Naive thymus-derived CD4-positive, alpha-beta T cell (primary cell): ENCODE measurements at regions of chr16 and their contacts with region 1.

Region 1: GRCh38 chr16:67246934-67247697 is at the start of gene FHOD1:
- DNase-seq: peak; percentile 88 to 100 (median 91)
- ATAC-seq: peak; percentile 85
- H3K4me3 ChIP-seq: peak within 1 kb of the TSS; percentile 68
- H3K4me3 Mint-ChIP-seq: peak within 1 kb of the TSS; percentile 83 to 96 (median 91)
- H3K27ac ChIP-seq: peak within 1 kb of the TSS; percentile 60
- H3K27ac Mint-ChIP-seq: peak within 1 kb of the TSS; percentile 70 to 92 (median 80)
- H3K4me1 ChIP-seq: peaks cover 31 to 39% of the 10 kb centered on the region in 2 donors
- H3K4me1 Mint-ChIP-seq: peaks cover 37 to 51% (median 45%) of the 10 kb centered on the region in 7 donors
- H3K27me3 ChIP-seq: no peaks in the 10 kb centered on the region
- H3K27me3 Mint-ChIP-seq: peaks cover 0 to 20% (median 0%) of the 10 kb centered on the region in 5 donors
- total RNA-seq, gene FHOD1: 23.7 to 81.7 (median 35.1) TPM

Region 2: DNA sequence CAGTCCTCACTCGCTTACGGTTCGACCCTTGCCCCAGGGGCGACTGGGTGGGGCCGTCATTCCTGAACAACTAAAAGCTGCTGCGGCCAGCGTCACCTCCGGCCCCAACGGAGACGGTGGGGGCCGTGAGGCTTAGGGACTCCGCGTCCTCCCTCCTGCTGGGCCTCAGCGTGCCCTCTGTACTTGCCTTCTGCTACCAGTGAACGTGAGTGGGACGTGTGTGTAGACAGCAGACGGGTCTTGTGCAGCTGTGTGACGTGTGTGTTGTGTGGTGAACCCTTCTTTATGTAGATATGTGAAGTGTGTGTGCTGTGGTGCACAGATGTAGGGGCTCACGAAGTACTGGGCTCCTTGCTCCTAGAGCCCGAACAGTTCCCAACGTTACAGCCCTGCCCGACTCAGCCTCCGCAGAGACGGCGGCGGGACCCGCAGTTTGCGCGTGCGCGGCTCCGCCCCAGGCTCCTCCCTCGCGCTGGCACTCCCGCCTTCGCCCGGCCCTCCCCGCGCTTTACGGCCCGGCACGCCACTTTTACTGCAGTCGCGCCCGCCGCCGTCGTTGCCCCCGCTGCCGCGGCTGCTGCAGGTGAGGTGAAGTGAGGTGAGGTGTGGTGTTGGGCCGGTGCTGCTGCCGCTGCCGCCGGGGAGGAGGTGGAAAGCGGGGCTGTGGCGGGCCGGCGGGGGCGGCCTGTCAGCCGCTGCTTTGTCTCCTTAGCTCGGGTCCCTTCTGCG is 137.5 kb before region 1 on chr16 and contains the start of gene PHAF1:
- CTCF ChIA-PET with region 1: no interaction called
- POLR2A ChIA-PET with region 1: no interaction called
- intact Hi-C with region 1: loop called in 1 of 2 experiments (anchors 1 kb)
- DNase-seq: peak; percentile 93 to 99 (median 97)
- ATAC-seq: peak; percentile 95
- H3K4me3 ChIP-seq: peak within 1 kb of the TSS; percentile 91
- H3K4me3 Mint-ChIP-seq: peak within 1 kb of the TSS; percentile 91 to 96 (median 94)
- H3K27ac ChIP-seq: peak within 1 kb of the TSS; percentile 78
- H3K27ac Mint-ChIP-seq: peak within 1 kb of the TSS; percentile 81 to 95 (median 87)
- H3K4me1 ChIP-seq: peaks cover 9 to 11% of the 10 kb centered on the region in 2 donors
- H3K4me1 Mint-ChIP-seq: peaks cover 19 to 43% (median 31%) of the 10 kb centered on the region in 7 donors
- H3K27me3 ChIP-seq: no peaks in the 10 kb centered on the region
- H3K27me3 Mint-ChIP-seq: no peaks in the 10 kb centered on the region
- total RNA-seq, gene PHAF1: 17.8 to 29.6 (median 21.2) TPM

Region 3: DNA sequence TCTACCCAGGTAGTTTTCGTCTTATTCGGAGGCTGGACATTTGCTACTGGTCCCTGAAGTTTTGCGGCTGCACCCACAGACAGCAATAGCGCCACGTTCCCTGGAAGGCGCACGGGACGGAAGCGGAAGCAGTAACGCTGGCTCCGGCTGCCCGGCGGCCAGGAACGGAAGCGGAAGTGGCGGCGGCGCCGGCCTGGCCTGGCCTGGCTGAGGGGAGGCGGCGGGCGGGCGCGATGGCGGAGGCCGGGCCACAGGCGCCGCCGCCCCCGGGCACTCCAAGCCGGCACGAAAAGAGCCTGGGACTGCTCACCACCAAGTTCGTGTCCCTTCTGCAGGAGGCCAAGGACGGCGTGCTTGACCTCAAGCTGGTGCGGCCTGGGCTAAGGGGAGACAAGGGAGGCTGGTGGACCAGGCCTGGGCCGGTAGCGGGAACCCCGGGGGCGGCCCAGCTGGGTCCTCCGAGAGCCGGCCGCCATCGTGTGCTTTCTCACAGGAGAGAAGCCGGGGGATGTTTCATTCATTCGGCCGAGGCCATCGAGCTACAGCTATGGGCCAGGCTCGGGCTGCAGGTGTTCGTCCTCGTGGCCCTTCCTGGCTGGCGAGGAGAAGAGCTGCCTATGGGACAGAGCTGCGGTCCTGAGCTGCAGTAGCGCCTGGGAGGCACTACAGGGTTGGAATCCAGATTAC is 55.0 kb before region 1 on chr16 and contains the start of gene E2F4:
- CTCF ChIA-PET with region 1: interaction called, 4 read pairs
- POLR2A ChIA-PET with region 1: no interaction called
- intact Hi-C with region 1: loop called (anchors 1 to 2 kb)
- DNase-seq: peak; percentile 72 to 88 (median 80)
- ATAC-seq: peak; percentile 97
- H3K4me3 ChIP-seq: peak within 1 kb of the TSS; percentile 72
- H3K4me3 Mint-ChIP-seq: peak within 1 kb of the TSS; percentile 83 to 93 (median 92)
- H3K27ac ChIP-seq: peak within 1 kb of the TSS; percentile 94
- H3K27ac Mint-ChIP-seq: peak within 1 kb of the TSS; percentile 53 to 95 (median 91)
- H3K4me1 ChIP-seq: peaks cover 22 to 26% of the 10 kb centered on the region in 2 donors
- H3K4me1 Mint-ChIP-seq: peaks cover 22 to 50% (median 46%) of the 10 kb centered on the region in 7 donors
- H3K27me3 ChIP-seq: no peaks in the 10 kb centered on the region
- H3K27me3 Mint-ChIP-seq: peaks cover 0 to 3% (median 0%) of the 10 kb centered on the region in 5 donors
- total RNA-seq, gene E2F4: 67.1 to 133 (median 73.0) TPM

Region 4: DNA sequence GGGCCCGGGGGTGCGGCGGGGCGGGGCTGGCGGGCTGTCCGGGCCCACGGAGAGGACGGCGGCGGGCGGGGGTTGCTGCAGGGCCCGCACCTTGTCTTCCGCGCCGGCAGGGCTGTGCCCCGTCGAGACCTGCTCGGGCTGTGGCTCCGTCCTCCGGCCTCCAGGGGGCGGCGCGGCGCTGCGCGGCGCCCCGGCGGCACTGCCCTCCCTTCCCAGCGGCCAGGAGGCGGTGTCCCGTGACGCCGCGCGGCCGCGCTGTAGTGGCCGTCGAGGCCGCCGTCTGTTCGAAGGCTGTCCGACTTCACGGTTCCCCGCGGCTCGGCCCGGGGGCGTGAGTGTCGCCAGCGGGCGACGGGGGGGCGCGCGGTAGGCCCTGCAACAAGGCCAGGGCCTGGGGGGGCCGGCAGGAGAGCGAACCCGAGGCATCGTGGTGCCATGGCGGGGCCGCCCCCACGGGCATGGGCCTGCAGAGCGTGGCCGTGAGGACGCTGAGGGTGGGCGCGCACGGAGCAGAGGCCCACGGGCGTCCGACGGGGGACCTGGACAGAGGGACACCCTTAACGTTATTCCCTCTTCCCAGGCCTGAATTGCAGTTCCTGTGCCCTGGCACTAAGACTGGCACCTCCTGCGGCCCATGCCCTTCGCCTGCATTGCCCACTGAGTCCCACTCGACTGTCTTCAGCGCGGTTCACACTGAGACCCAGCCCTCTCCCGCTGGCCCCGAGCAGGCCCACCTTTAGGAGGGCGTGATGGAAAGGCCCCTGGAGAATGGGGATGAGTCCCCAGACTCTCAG is 32.4 kb after region 1 on chr16 and contains the start of gene PLEKHG4:
- CTCF ChIA-PET with region 1: no interaction called
- POLR2A ChIA-PET with region 1: interaction called, 4 read pairs
- intact Hi-C with region 1: loop called (anchors 2 kb)
- DNase-seq: peak in 8 of 9 donors; percentile 61 to 79 (median 73)
- ATAC-seq: peak; percentile 98
- H3K4me3 ChIP-seq: peak within 1 kb of the TSS; percentile 70
- H3K4me3 Mint-ChIP-seq: peak within 1 kb of the TSS; percentile 74 to 90 (median 83)
- H3K27ac ChIP-seq: peak within 1 kb of the TSS; percentile 72
- H3K27ac Mint-ChIP-seq: peak within 1 kb of the TSS; percentile 62 to 93 (median 78)
- H3K4me1 ChIP-seq: peaks cover 9 to 27% of the 10 kb centered on the region in 2 donors
- H3K4me1 Mint-ChIP-seq: peaks cover 6 to 26% (median 21%) of the 10 kb centered on the region in 7 donors
- H3K27me3 ChIP-seq: no peaks in the 10 kb centered on the region
- H3K27me3 Mint-ChIP-seq: no peaks in the 10 kb centered on the region
- total RNA-seq, gene PLEKHG4: 18.9 to 32.3 (median 26.1) TPM

Region 5: DNA sequence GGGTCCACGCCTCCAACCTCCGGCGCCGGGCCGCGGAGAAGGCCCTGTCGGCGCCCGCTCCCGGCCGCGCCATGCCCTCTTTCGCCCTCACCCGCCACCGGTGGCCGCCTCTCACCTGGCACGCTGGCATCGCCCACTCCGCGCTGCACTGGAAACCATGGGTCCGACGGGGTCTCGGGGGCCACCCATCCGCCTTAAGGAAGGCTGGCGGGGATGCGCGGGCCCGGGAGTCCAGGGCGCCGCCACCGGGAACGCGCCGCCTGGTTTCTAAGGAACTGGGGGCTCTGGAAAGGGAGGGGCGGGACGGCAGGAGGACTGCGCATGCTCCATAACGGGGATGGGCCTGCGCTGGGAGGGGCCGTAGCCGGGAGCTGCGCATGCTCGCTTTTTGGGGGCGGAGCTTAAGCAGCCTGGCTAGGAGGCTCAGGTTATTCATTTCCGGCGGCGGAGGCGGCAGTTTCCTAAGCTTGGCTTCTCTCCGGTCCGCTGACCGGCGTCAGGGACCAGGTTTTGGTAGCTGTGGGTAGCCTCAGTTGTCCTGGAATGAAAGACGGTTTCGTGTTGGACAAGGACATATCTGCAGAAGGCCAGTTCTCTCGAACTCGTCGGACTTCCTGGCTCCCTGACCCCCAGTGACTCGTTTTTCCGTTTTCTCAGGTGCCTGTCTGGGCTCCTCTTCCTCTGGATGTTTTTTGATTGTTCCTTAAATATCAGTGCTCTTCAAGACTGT is 472.1 kb after region 1 on chr16 and contains the start of gene GFOD2:
- CTCF ChIA-PET with region 1: no interaction called
- POLR2A ChIA-PET with region 1: no interaction called
- intact Hi-C with region 1: loop called in 1 of 2 experiments (anchors 1 kb)
- DNase-seq: peak; percentile 94 to 100 (median 96)
- ATAC-seq: peak; percentile 96
- H3K4me3 ChIP-seq: peak within 1 kb of the TSS; percentile 95
- H3K4me3 Mint-ChIP-seq: peak within 1 kb of the TSS; percentile 90 to 99 (median 94)
- H3K27ac ChIP-seq: peak within 1 kb of the TSS; percentile 88
- H3K27ac Mint-ChIP-seq: peak within 1 kb of the TSS; percentile 91 to 99 (median 98)
- H3K4me1 ChIP-seq: peaks cover 15 to 16% of the 10 kb centered on the region in 2 donors
- H3K4me1 Mint-ChIP-seq: peaks cover 19 to 51% (median 39%) of the 10 kb centered on the region in 7 donors
- H3K27me3 ChIP-seq: no peaks in the 10 kb centered on the region
- H3K27me3 Mint-ChIP-seq: no peaks in the 10 kb centered on the region
- total RNA-seq, gene GFOD2: 6.3 to 13.4 (median 11.4) TPM